Sigmoid colon (tissue), 7 donors: ENCODE measurements at regions of chr1 and their contacts with region 1.

Region 1: DNA sequence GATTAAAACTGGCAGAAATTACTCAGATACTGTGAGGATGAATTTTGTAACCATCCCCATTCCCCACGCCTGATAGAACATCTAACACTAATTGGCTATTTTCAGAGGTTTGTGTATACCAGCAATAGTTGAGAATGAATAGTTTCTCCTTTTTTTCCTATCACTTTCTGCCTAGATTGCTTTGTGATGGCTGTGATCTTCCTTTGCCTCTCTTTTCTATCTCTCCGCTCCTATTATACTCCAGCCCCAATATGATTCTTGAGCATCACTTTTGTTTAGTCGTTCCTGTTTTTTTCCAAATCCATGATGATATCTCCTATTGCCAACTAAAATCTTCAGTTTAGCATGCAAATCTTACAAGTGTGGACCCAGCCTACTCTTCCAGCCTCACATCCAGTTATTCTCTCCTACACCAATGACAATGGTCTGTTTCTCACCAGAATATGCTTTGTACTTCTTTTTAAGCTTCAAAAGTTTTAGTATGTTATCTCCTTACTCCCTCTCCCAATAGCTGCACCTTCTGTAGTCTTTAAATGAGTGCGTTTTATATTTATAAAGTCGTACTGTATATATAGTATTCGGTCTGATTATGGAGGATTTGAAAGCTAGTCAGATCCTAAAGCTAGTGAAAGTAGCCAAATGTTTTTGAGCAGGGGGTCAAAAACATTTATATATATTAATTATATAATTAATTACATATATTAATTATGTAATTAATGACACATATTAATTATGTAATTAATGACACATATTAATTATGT is 25.2 kb downstream of the MAGI3 start:
- DNase-seq: no peak
- H3K4me3 ChIP-seq: no peak overlapping the region
- H3K27ac ChIP-seq: no peak overlapping the region
- H3K4me1 ChIP-seq: peaks cover 0 to 10% (median 2%) of the 10 kb centered on the region in 4 donors
- H3K27me3 ChIP-seq: no peaks in the 10 kb centered on the region
- CTCF ChIP-seq: no peak
- EP300 ChIP-seq: no peak
- POLR2A ChIP-seq: no peak

Region 2: DNA sequence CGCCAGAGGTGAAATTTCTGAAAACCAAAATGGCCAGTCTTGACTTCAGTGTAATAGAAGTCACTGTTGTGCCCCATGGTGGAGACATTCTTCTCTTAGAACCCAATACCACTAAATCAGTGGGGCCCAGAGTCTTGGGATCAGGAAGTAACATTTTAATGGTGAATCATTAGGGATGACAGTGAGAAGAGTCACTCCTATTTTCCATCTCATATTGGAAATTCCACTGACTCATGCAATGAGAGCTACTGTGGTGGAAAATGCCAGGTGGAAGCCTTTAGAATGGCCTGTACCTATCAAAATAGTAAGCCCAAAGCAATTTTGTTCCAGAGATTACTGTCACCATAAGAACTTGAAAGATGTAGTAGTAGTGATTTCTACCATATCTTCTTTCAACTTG is 679.7 kb before region 1 on chr1:
- intact Hi-C with region 1: no loop called
- DNase-seq: no peak
- H3K4me3 ChIP-seq: no peak overlapping the region
- H3K27ac ChIP-seq: no peak overlapping the region
- H3K4me1 ChIP-seq: no peaks in the 10 kb centered on the region
- H3K27me3 ChIP-seq: no peaks in the 10 kb centered on the region
- CTCF ChIP-seq: no peak
- EP300 ChIP-seq: no peak
- POLR2A ChIP-seq: no peak

Region 3: GRCh38 chr1:113456967-113457366 is 41.5 kb after region 1 on chr1:
- intact Hi-C with region 1: loop called (anchors 5 kb)
- DNase-seq: peak; percentile 66
- H3K4me3 ChIP-seq: no peak overlapping the region
- H3K27ac ChIP-seq: peak overlapping the region in 3 of 4 donors; percentile 47 to 53 (median 51)
- H3K4me1 ChIP-seq: peaks cover 0 to 25% (median 21%) of the 10 kb centered on the region in 4 donors
- H3K27me3 ChIP-seq: no peaks in the 10 kb centered on the region
- CTCF ChIP-seq: no peak
- EP300 ChIP-seq: no peak
- POLR2A ChIP-seq: no peak

Region 4: GRCh38 chr1:113714606-113715275 is 299.3 kb after region 1 on chr1:
- intact Hi-C with region 1: no loop called
- DNase-seq: no peak
- H3K4me3 ChIP-seq: no peak overlapping the region
- H3K27ac ChIP-seq: no peak overlapping the region
- H3K4me1 ChIP-seq: no peaks in the 10 kb centered on the region
- H3K27me3 ChIP-seq: no peaks in the 10 kb centered on the region
- CTCF ChIP-seq: no peak
- EP300 ChIP-seq: no peak
- POLR2A ChIP-seq: no peak